GM10248 (cell line): ENCODE measurements at regions of chr10 and their contacts with region 1.

Region 1: GRCh38 chr10:102072673-102073527 is 7.8 kb downstream of the HPS6 start:
- DNase-seq: peak; percentile 83
- CTCF ChIP-seq: peak; percentile 88

Region 2: GRCh38 chr10:101602761-101603398 is 470.0 kb before region 1 on chr10:
- CTCF ChIA-PET with region 1: interaction called, 13 read pairs
- POLR2A ChIA-PET with region 1: no interaction called
- DNase-seq: peak; percentile 84
- CTCF ChIP-seq: peak; percentile 96

Region 3: GRCh38 chr10:102055647-102056419 is 17.1 kb before region 1 on chr10 and contains the start of gene ARMH3:
- CTCF ChIA-PET with region 1: interaction called, 34 read pairs
- POLR2A ChIA-PET with region 1: interaction called, 3 read pairs
- DNase-seq: peak; percentile 98
- CTCF ChIP-seq: no peak

Region 4: GRCh38 chr10:102090772-102091171 is 17.9 kb after region 1 on chr10:
- CTCF ChIA-PET with region 1: interaction called, 56 read pairs
- POLR2A ChIA-PET with region 1: no interaction called
- DNase-seq: no peak
- CTCF ChIP-seq: no peak

Region 5: DNA sequence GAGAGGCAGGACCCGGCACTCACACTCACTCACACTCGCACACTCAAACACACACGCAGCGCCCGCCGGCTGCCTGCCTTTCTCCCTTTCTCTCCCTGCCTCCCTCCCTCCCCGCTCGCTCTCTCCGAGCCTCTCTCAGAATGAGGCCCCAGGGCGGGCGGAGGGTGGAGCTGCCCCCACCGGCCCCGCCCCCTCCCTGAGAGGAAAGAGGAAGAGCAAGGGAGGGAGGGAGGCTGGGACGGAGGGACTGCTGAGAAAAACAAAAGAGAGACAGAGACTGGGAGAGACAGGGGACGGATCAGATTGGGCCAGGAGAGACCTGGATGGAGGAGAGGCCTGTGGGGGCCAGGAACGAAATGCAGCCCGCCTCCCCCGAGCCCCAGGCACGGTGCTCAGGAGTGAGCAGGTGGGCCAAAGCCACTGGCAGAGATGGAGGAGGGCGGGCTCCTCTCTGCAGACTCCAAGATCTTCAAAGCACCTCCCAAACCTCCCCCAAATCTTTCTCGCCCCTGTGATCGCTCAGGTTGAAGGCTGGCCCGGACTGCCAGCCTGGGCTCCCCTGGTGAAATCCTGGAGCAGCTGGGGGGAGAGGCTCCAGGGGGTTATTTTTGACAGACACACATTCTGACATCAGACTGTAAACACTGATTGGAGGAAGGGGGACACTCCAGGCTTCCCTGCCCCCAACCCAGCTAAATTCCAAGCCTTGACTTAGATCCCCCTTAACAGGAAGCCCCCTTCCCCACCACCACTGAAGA is 42.1 kb after region 1 on chr10:
- CTCF ChIA-PET with region 1: interaction called, 65 read pairs
- POLR2A ChIA-PET with region 1: interaction called, 3 read pairs
- DNase-seq: peak; percentile 90
- CTCF ChIP-seq: no peak